ENCODE measurements at regions of chr1 and their contacts with region 1.

Region 1: DNA sequence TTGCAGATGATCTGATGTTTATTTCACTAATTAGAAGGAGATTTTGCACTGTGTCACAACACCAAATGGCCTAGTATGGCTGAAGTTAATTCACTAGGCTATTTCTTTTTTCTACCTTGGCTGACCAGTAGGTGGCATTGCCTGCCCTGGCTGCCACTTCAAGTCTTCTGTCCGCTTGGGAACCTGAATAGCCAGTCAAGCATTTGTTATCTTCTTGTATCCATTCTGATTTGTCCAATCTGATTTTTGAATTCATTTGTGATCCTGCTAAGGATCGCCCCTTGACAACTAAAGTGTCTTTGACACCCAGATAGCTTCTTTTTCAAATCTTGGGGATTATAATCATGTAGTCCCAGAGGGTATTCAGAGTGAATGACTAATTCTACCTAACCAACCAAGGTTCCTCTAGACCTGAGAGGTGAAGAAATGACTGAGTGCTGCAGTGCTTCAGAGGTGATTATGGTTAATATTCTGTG is 99.4 kb downstream of the GIPC2 start:
- H3K4me3 Mint-ChIP-seq: no peak overlapping the region
- H3K27ac Mint-ChIP-seq: no peak overlapping the region
- H3K4me1 Mint-ChIP-seq: peaks cover 7% of the 10 kb centered on the region
- H3K27me3 Mint-ChIP-seq: no peaks in the 10 kb centered on the region

Region 2: DNA sequence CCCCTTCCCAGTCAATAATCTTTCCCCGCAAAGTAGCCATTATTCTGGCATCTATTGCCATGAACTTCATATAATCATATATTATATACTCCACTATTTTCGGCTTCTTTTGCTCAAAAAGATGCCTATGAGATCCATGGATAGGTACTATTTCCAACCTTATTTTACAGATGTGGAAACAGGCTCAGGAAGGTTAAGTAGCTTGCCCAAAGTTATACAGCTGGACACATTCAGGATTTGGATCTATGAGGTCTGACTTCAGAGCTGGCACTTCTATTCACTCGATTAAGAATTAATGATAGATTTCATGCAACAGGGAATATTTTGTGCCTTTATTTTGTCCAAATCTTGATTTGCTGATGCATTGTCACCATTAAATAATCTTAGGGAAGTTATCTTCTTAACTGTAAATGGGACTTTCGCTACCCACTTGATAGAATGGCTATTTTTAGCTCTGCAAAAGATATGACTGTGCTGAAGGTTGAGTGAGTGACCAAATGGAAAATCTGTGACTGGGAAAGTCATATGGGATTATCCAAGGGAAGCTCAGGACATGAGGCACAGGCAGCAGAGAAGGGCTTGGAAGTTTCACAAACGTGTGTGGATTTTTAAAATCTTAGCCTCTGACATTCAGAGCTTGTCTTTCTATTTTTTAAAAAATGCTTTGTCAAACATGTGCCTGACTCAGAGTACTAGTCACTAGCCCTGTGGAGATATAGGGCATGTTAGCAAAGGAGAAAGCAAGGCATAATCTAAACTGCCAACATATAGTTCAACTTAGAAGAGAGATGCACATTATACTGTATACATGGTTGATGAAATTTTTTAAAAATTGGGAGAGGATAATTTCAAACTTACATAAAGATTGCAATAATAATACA is 62.9 kb before region 1 on chr1:
- intact Hi-C with region 1: no loop called
- H3K4me3 Mint-ChIP-seq: no peak overlapping the region
- H3K27ac Mint-ChIP-seq: no peak overlapping the region
- H3K4me1 Mint-ChIP-seq: no peaks in the 10 kb centered on the region
- H3K27me3 Mint-ChIP-seq: no peaks in the 10 kb centered on the region

Region 3: GRCh38 chr1:78114034-78114956 is 30.8 kb before region 1 on chr1:
- intact Hi-C with region 1: no loop called
- H3K4me3 Mint-ChIP-seq: no peak overlapping the region
- H3K27ac Mint-ChIP-seq: no peak overlapping the region
- H3K4me1 Mint-ChIP-seq: no peaks in the 10 kb centered on the region
- H3K27me3 Mint-ChIP-seq: no peaks in the 10 kb centered on the region

Region 4: DNA sequence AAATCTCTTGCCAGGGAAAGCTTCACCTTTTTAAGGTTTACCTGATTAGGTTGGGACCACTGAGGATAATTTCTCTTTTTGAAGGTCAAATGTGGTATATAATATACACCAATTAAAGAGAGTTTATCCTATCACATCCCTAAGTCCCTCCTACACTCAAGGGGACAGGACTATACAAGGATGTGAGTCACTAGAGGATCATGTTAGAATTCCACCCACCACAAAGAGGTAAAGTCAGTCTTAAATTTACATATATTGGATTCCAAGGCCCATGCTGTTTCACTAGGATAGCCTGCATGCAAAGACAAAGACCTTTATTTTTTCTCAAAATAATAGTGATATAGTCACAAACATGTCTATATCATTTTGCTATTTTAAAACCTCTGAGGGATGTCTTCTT is 65.0 kb after region 1 on chr1:
- intact Hi-C with region 1: no loop called
- H3K4me3 Mint-ChIP-seq: no peak overlapping the region
- H3K27ac Mint-ChIP-seq: no peak overlapping the region
- H3K4me1 Mint-ChIP-seq: no peaks in the 10 kb centered on the region
- H3K27me3 Mint-ChIP-seq: no peaks in the 10 kb centered on the region

Region 5: DNA sequence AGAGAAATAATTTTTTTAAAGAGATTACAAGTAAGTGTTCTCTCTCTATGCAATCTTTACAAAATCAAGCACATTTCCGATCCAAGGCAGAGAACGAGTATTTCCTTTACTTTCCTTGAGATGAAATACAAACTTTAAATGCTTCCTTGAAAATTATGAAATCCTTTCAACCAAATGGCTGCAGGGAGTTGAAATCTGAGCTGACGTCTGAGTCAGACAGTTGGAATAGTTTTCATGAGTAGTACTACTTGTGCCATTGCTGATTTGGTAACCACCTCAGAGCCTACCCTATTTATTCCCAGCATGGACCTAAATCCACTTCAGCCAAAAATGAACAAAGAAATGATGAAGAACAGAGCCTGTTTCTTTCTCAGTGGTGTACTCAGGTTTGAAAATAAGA is 84.2 kb after region 1 on chr1:
- intact Hi-C with region 1: no loop called
- H3K4me3 Mint-ChIP-seq: no peak overlapping the region
- H3K27ac Mint-ChIP-seq: no peak overlapping the region
- H3K4me1 Mint-ChIP-seq: no peaks in the 10 kb centered on the region
- H3K27me3 Mint-ChIP-seq: no peaks in the 10 kb centered on the region

Region 6: DNA sequence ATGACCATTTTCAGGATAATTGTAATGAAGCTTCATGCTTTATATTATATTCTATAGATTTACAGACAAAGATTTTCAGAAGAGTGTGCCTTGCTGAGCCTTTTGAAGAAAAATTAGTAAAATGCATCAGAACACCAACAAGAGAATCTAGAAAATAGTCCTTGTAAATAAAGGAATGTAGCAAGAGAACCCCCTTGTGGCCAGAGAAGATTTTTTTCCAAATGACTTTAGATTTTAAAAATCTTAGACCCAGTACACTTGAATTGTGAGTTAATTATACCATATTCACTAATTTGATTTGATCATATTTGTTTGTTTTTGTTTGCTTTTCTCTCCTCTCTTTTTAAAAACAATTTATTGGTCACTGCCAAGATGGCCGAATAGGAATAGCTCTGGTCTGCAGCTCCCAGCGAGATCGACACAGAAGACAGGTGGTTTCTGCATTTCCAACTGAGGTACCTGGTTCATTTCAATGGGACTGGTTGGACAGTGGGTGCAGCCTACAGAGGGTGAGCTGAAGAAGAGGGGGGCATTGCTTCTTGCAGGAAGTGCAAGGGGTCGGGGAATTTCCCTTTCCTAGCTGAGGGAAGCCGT is 462.3 kb after region 1 on chr1:
- intact Hi-C with region 1: loop called (anchors 5 kb)
- H3K4me3 Mint-ChIP-seq: no peak overlapping the region
- H3K27ac Mint-ChIP-seq: no peak overlapping the region
- H3K4me1 Mint-ChIP-seq: no peaks in the 10 kb centered on the region
- H3K27me3 Mint-ChIP-seq: no peaks in the 10 kb centered on the region

Region 7: DNA sequence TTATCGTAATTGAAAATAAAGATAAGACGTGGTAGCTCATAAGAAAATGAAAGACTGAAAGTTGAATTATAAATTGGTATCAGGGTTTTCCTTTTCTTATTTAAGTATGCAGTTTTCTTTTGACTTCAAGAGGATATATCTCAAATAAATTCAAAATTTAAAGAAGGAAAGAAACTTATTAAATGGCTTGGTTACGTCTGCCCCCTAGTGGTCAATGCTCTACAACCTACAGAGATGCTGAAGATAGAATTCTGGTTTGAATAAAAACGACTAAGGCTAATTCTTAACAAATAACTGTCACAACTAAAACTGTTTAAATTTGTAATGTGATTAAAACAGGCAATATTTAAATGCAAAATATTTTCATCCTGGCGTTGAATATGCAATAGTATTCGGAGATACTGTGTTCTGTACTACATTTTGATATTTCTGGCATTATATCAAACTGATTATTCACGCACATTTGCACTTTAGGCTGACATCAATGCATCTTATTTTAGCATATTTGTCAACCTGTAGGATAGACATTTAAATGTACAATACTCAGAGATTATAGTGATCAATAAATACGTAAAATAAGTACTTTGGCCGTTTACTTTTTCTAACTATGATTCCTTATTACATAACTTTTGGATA is 531.3 kb after region 1 on chr1:
- intact Hi-C with region 1: loop called (anchors 2 kb)
- H3K4me3 Mint-ChIP-seq: no peak overlapping the region
- H3K27ac Mint-ChIP-seq: no peak overlapping the region
- H3K4me1 Mint-ChIP-seq: peaks cover 6% of the 10 kb centered on the region
- H3K27me3 Mint-ChIP-seq: no peaks in the 10 kb centered on the region